ENCODE measurements at regions of chr2 and their contacts with region 1.

Region 1: GRCh38 chr2:27890146-27890923 is at the starts of genes BABAM2 and RBKS:
- DNase-seq: peak; percentile 58 to 89 (median 80)
- H3K4me3 ChIP-seq: peak within 1 kb of the TSS; percentile 57 to 96 (median 85)
- H3K27ac ChIP-seq: peak within 1 kb of the TSS; percentile 24 to 99 (median 94)
- H3K27me3 ChIP-seq: no peaks in the 10 kb centered on the region
- CTCF ChIP-seq: peak in 14 of 56 donors; percentile 3 to 32 (median 10)
- total RNA-seq, gene BABAM2: 31.9 to 79.7 (median 53.8) TPM
- total RNA-seq, gene RBKS: 2.1 to 10.6 (median 4.0) TPM

Region 2: GRCh38 chr2:27765621-27766269 is 124.6 kb before region 1 on chr2:
- intact Hi-C with region 1: loop called (anchors 5 kb)
- DNase-seq: peak in 4 of 10 donors; percentile 28 to 48 (median 38)
- H3K4me3 ChIP-seq: peak overlapping the region in 52 of 59 donors; percentile 5 to 58 (median 38)
- H3K27ac ChIP-seq: peak overlapping the region in 3 of 59 donors; percentile 13 to 43 (median 14)
- H3K27me3 ChIP-seq: peaks cover 0 to 19% (median 0%) of the 10 kb centered on the region in 45 donors
- CTCF ChIP-seq: no peak

Region 3: DNA sequence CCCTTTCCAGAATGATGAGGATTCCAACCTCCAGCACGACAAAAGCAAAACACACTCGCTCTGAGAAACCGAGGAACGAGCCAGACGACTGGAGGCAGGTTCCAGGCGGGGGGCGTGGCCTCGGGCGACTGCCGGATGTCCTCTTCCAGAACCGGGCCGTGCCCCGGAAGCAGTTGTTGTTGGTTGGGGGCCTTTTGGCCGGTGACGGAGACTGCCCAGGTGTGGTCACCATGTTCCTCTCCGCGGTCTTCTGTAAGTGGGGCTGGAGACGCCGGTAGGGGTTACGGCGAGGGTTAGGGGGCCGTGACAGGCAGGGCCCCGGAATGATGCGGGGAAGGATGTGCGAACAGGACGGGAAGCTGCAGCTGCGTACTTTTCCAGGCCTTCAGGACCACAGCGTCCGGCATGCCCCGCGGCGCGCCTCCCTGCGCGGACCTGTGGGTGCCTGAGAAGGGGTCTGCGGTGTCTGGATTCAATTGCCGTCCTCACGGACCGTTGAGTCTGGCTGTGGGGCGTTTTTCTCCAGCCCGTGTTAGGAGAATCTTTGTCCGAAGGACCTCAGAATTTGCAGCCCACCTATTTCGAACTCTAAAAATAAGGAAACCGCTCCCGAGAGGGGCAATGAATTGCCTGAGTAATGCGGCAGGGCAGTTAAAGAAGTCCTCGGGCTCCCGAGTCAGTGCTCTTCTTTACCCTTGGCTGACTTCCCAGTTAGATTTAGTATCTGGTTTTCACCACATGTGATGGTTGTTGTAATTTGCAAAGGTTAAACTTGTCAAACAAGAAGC is 118.6 kb before region 1 on chr2 and contains the start of gene MRPL33:
- intact Hi-C with region 1: loop called (anchors 5 kb)
- DNase-seq: peak; percentile 85 to 97 (median 94)
- H3K4me3 ChIP-seq: peak within 1 kb of the TSS; percentile 63 to 99 (median 88)
- H3K27ac ChIP-seq: peak within 1 kb of the TSS in 58 of 59 donors; percentile 67 to 98 (median 90)
- H3K27me3 ChIP-seq: peaks cover 0 to 13% (median 0%) of the 10 kb centered on the region in 45 donors
- CTCF ChIP-seq: peak in 30 of 56 donors; percentile 6 to 50 (median 26)
- total RNA-seq, gene MRPL33: 40.3 to 106 (median 70.5) TPM

Region 4: GRCh38 chr2:27954771-27955383 is 64.5 kb after region 1 on chr2:
- intact Hi-C with region 1: loop called in 1 of 2 experiments (anchors 10 kb)
- DNase-seq: peak in 2 of 10 donors; percentile 16
- H3K4me3 ChIP-seq: no peak overlapping the region
- H3K27ac ChIP-seq: peak overlapping the region in 52 of 59 donors; percentile 3 to 87 (median 50)
- H3K27me3 ChIP-seq: no peaks in the 10 kb centered on the region
- CTCF ChIP-seq: peak in 37 of 56 donors; percentile 15 to 55 (median 32)

Measured in dorsolateral prefrontal cortex (tissue), 120 donors.